ENCODE measurements at regions of chr1 and their contacts with region 1.

Region 1: DNA sequence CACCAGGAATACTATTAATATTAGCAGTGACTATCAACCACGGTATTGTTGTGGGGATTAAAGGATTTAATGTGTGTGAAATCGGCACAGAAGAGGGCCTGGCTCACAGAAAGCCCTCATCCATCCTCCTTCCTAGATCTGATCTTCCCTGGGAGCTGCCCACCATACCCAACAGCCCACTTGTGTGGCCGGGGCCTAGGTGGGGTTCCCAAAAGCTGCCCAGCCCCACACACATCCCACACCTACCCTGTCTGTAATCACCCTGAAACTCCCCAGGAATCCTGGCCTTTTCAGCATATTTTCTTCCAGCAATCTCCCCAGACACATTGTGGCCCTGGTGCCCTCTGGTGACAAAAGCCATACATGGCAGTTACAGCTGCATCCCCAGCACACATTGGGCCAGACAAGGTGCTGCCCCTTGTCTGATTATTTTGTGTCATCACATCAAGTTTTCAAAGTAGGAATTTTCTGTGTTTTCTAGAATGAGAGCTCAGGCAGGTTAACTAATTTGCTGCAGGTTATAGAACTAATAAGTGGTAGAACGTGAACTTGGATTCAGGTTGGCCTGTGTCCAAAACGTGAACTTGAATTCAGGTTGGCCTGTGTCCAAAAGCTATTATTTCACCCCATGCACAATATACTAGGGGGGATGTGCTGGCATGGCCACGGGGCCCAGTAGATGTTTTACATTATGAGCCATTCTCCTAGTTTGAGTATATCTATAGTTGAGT is 5.3 kb upstream of the SLC6A9 start:
- DNase-seq: peak; percentile 52 to 82 (median 61)
- ATAC-seq: peak; percentile 91
- H3K4me3 ChIP-seq: no peak overlapping the region
- H3K4me3 Mint-ChIP-seq: no peak overlapping the region
- H3K27ac ChIP-seq: no peak overlapping the region
- H3K27ac Mint-ChIP-seq: no peak overlapping the region
- H3K4me1 ChIP-seq: peaks cover 3% of the 10 kb centered on the region
- H3K4me1 Mint-ChIP-seq: peaks cover 4% of the 10 kb centered on the region
- H3K27me3 ChIP-seq: no peaks in the 10 kb centered on the region
- H3K27me3 Mint-ChIP-seq: no peaks in the 10 kb centered on the region
- CTCF ChIP-seq: peak; percentile 84

Region 2: DNA sequence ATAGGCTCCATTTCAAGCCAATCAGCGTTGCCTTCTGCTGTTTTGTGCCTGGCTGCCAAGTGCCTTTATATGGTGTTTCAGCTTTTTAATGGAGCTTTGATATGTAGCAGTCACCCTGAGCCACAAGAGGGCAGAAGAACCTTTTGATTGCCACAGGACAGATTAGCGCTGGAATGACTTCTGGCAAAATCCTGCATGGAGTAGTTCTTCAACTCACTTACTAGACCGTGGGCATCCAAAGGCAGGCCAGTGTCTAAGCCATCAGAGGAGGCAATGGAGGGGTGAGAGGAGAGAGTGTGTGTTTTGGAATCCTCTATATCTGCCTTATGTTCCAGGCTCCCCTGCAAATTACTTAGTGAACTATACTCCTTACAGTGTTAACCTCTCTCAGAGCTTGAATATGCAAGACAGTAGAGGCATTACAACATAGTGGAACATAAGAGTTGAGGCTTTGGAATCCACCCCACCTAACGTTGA is 273.0 kb before region 1 on chr1:
- CTCF ChIA-PET with region 1: no interaction called
- POLR2A ChIA-PET with region 1: no interaction called
- intact Hi-C with region 1: loop called in 1 of 2 experiments (anchors 5 kb)
- DNase-seq: peak in 13 of 14 experiments; percentile 1 to 70 (median 17)
- ATAC-seq: peak; percentile 78
- H3K4me3 ChIP-seq: no peak overlapping the region
- H3K4me3 Mint-ChIP-seq: no peak overlapping the region
- H3K27ac ChIP-seq: no peak overlapping the region
- H3K27ac Mint-ChIP-seq: no peak overlapping the region
- H3K4me1 ChIP-seq: no peaks in the 10 kb centered on the region
- H3K4me1 Mint-ChIP-seq: peaks cover 6% of the 10 kb centered on the region
- H3K27me3 ChIP-seq: no peaks in the 10 kb centered on the region
- H3K27me3 Mint-ChIP-seq: no peaks in the 10 kb centered on the region
- CTCF ChIP-seq: peak; percentile 75

Region 3: DNA sequence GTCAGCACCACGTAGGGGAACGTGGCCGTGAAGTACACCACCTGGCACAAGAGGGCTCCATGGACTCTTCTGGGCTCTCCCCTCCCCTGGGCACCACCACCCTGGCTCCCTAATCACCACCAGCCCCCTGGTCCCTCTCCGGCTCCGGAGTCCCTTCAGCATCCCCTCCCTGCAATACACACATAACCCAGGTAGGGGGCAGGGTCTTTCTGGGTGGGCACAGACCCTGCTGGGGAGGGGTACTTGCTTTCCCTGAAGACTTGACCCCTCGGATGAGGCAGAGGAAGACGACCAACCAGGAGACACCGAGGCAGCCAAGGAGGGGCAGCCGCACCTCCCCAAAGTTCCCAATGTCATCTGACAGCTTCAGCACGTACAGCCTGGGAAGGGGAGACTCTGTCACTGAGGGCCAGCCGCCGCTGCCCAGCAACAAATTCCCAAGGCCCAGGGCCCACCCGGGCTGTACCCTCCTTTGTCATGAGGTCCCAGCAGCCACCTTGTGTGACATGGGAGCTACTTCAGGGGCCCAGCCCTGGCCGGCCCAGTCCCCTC is 33.9 kb before region 1 on chr1:
- CTCF ChIA-PET with region 1: interaction called, 49 read pairs
- POLR2A ChIA-PET with region 1: interaction called, 5 read pairs
- intact Hi-C with region 1: loop called (anchors 1 kb)
- DNase-seq: no peak
- ATAC-seq: no peak
- H3K4me3 ChIP-seq: no peak overlapping the region
- H3K4me3 Mint-ChIP-seq: no peak overlapping the region
- H3K27ac ChIP-seq: no peak overlapping the region
- H3K27ac Mint-ChIP-seq: no peak overlapping the region
- H3K4me1 ChIP-seq: no peaks in the 10 kb centered on the region
- H3K4me1 Mint-ChIP-seq: no peaks in the 10 kb centered on the region
- H3K27me3 ChIP-seq: no peaks in the 10 kb centered on the region
- H3K27me3 Mint-ChIP-seq: no peaks in the 10 kb centered on the region
- CTCF ChIP-seq: no peak

Measured in CD4-positive, alpha-beta T cell (primary cell).